ENCODE measurements at regions of chr19 and their contacts with region 1.

Region 1: GRCh38 chr19:50030225-50030624 is 4.4 kb downstream of the ZNF473 start:
- DNase-seq: no peak
- H3K4me3 ChIP-seq: no peak overlapping the region
- H3K27ac ChIP-seq: no peak overlapping the region
- H3K4me1 ChIP-seq: no peaks in the 10 kb centered on the region; a peak in 1 of 7 replicates
- H3K27me3 ChIP-seq: no peaks in the 10 kb centered on the region
- CTCF ChIP-seq: no peak
- EP300 ChIP-seq: no peak
- POLR2A ChIP-seq: no peak
- RAD21 ChIP-seq: no peak

Region 2: GRCh38 chr19:50046649-50047503 is 16.7 kb after region 1 on chr19:
- CTCF ChIA-PET with region 1: interaction called, 10 read pairs
- POLR2A ChIA-PET with region 1: no interaction called
- DNase-seq: peak in 1 of 2 experiments; percentile 84
- H3K4me3 ChIP-seq: no peak overlapping the region
- H3K27ac ChIP-seq: no peak overlapping the region
- H3K4me1 ChIP-seq: no peaks in the 10 kb centered on the region
- H3K27me3 ChIP-seq: no peaks in the 10 kb centered on the region
- CTCF ChIP-seq: peak; percentile 76 to 86 (median 84)
- EP300 ChIP-seq: no peak
- POLR2A ChIP-seq: no peak
- RAD21 ChIP-seq: peak; percentile 77 to 80

Region 3: GRCh38 chr19:50061650-50062049 is 31.4 kb after region 1 on chr19:
- CTCF ChIA-PET with region 1: no interaction called
- POLR2A ChIA-PET with region 1: no interaction called
- DNase-seq: no peak
- H3K4me3 ChIP-seq: no peak overlapping the region
- H3K27ac ChIP-seq: no peak overlapping the region
- H3K4me1 ChIP-seq: no peaks in the 10 kb centered on the region
- H3K27me3 ChIP-seq: no peaks in the 10 kb centered on the region
- CTCF ChIP-seq: no peak
- EP300 ChIP-seq: no peak
- POLR2A ChIP-seq: no peak
- RAD21 ChIP-seq: no peak